CD4-positive, alpha-beta memory T cell (primary cell): ENCODE measurements at regions of chr21 and their contacts with region 1.

Region 1: GRCh38 chr21:45590246-45590725 is 48.0 kb upstream of the SLC19A1 start:
- DNase-seq: peak in 4 of 5 donors; percentile 70 to 76 (median 70)
- H3K4me3 ChIP-seq: peak overlapping the region in 1 of 2 donors; percentile 42
- H3K4me3 Mint-ChIP-seq: peak overlapping the region in 7 of 8 donors; percentile 23 to 76 (median 49)
- H3K27ac ChIP-seq: peak overlapping the region; percentile 23
- H3K27ac Mint-ChIP-seq: no peak overlapping the region
- H3K4me1 ChIP-seq: peaks cover 29% of the 10 kb centered on the region
- H3K4me1 Mint-ChIP-seq: peaks cover 9 to 15% (median 11%) of the 10 kb centered on the region in 4 donors
- H3K27me3 ChIP-seq: no peaks in the 10 kb centered on the region
- H3K27me3 Mint-ChIP-seq: peaks cover 2 to 8% of the 10 kb centered on the region in 2 donors

Region 2: DNA sequence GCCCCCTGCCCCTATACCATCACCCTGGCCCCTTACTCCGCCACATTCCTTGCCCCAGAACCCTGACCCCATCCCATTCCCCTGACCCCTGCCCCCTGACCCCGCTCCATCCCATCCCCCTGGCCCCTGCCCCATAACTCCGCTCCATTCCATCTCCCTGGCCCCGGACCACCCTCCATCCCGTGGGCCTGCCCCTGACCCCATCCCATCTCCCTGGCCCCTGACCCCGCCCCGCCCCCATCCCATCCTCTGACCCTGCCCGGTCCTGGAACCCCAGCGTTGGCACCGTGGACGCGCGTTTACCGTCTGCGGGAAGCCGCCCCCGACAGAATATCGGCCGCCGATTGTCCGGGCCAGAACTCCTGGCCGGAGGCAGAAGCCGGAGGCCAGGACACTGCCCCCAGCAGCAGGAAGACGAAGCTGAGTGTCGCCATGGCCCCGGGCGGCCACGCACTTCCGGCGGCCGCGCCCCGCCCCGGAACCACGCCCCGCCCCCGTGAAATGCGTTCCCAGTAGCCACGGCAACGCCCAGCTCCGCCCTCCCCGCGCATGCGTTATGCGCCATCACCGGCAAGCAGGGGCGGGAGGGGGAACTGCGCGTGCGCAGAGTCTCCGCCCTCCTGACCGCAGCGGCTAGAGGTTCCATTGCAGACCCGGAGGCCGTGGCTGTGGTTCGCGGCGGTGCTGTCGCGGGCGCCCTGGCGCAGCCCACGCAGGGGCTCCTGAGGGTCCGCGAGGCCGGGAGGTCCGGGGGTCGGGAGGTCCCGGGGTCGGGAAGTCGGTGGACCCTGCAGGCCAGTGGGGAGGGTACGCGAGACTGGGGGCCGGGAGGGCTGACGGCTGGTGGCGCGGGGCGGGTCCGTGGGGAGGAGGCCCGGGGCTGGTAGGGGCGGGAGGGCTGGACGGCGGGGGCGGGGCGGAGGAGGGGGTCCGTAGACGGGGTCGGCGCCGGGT is 302.6 kb before region 1 on chr21 and contains the start of gene POFUT2:
- CTCF ChIA-PET with region 1: no interaction called
- POLR2A ChIA-PET with region 1: interaction called, 3 read pairs
- intact Hi-C with region 1: loop called (anchors 5 kb)
- DNase-seq: peak; percentile 95 to 100 (median 98)
- H3K4me3 ChIP-seq: peak within 1 kb of the TSS in 1 of 2 donors; percentile 63
- H3K4me3 Mint-ChIP-seq: peak within 1 kb of the TSS; percentile 78 to 96 (median 84)
- H3K27ac ChIP-seq: peak within 1 kb of the TSS; percentile 78
- H3K27ac Mint-ChIP-seq: peak within 1 kb of the TSS; percentile 87 to 97 (median 93)
- H3K4me1 ChIP-seq: peaks cover 14% of the 10 kb centered on the region
- H3K4me1 Mint-ChIP-seq: peaks cover 12 to 46% (median 24%) of the 10 kb centered on the region in 4 donors
- H3K27me3 ChIP-seq: no peaks in the 10 kb centered on the region
- H3K27me3 Mint-ChIP-seq: no peaks in the 10 kb centered on the region
- total RNA-seq, gene POFUT2: 40.1 to 40.8 TPM

Region 3: GRCh38 chr21:45615145-45615711 is 24.9 kb after region 1 on chr21:
- CTCF ChIA-PET with region 1: no interaction called
- POLR2A ChIA-PET with region 1: no interaction called
- intact Hi-C with region 1: loop called (anchors 2 kb)
- DNase-seq: peak; percentile 91 to 95 (median 92)
- H3K4me3 ChIP-seq: peak overlapping the region; percentile 61 to 63
- H3K4me3 Mint-ChIP-seq: peak overlapping the region; percentile 79 to 94 (median 90)
- H3K27ac ChIP-seq: peak overlapping the region; percentile 81
- H3K27ac Mint-ChIP-seq: peak overlapping the region; percentile 88 to 99 (median 99)
- H3K4me1 ChIP-seq: peaks cover 33% of the 10 kb centered on the region
- H3K4me1 Mint-ChIP-seq: peaks cover 21 to 36% (median 30%) of the 10 kb centered on the region in 4 donors
- H3K27me3 ChIP-seq: no peaks in the 10 kb centered on the region
- H3K27me3 Mint-ChIP-seq: peaks cover 0 to 12% of the 10 kb centered on the region in 2 donors

Region 4: GRCh38 chr21:45643021-45643980 is 53.0 kb after region 1 on chr21 and contains the start of gene PCBP3:
- CTCF ChIA-PET with region 1: interaction called, 4 read pairs
- POLR2A ChIA-PET with region 1: no interaction called
- intact Hi-C with region 1: loop called (anchors 1 kb)
- DNase-seq: peak; percentile 87 to 96 (median 89)
- H3K4me3 ChIP-seq: no peak within 1 kb of the TSS
- H3K4me3 Mint-ChIP-seq: peak within 1 kb of the TSS; percentile 69 to 83 (median 78)
- H3K27ac ChIP-seq: no peak within 1 kb of the TSS
- H3K27ac Mint-ChIP-seq: peak within 1 kb of the TSS in 5 of 7 donors; percentile 78 to 98 (median 82)
- H3K4me1 ChIP-seq: peaks cover 24% of the 10 kb centered on the region
- H3K4me1 Mint-ChIP-seq: peaks cover 7 to 38% (median 25%) of the 10 kb centered on the region in 4 donors
- H3K27me3 ChIP-seq: peaks cover 11% of the 10 kb centered on the region
- H3K27me3 Mint-ChIP-seq: peaks cover 10 to 20% of the 10 kb centered on the region in 2 donors
- total RNA-seq, gene PCBP3: 0.99 to 1.6 TPM